Left colon (tissue), 2 donors: ENCODE measurements at regions of chr14 and their contacts with region 1.

Region 1: GRCh38 chr14:20855652-20856291 is 35.4 kb upstream of the RNASE3 start:
- DNase-seq: peak; percentile 44 to 47
- ATAC-seq: peak; percentile 94

Region 2: DNA sequence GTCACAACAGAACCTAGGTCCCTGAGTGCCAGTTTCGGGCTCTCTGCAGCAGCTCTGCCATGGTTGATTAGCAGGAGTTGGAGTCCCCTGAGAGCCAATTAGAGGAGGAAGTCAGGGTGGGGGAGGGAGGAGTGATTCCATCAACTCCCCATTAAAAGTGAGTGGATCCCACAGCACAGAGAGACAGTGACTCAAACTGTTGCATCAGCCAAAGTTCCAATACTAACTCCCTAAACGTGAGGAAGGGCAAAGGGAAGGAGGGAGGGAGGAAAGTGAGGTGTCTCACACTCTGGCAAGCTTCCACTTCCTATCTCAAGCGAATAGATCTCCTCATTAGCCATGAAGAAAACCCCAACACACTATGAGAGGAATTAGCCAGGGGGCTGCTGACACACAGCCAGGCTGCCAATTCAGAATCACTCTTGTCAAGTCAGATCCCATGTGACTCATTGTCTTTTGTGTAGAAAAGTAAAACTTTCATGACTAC is 593.1 kb before region 1 on chr14:
- intact Hi-C with region 1: no loop called
- DNase-seq: no peak
- ATAC-seq: no peak

Region 3: DNA sequence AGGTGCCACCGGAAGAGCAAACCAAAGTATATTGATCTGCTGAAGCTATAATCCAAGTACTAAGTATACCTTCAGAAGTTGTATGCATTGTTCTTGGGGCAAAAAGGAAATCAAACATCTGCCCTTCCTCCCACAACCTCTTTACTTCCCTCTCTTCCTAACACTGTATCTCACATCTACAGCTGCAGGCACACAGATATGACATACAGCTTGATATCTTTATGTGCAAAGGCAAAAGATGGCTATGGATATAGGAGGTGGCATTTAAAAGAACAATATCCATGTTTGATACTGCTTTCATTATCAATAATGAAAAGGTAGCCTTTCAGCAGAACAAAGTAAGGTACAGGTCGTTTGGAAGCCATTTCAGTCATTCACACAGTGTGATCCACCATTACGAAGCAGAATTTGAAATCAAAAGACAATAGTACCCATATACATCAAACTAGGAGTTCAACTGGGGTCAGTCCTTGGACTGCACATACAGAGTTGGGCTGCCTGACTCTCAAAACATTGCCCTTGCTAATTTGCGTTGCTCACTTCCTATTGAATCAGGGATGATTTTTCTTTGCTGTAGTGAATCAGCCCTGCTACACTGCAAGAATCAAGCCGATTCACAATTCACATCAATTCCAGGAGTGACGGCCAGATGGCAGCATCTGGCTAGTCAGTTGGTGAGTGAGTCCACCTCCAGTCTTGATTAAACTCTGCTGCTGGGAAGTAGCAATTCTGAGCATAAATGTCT is 158.3 kb before region 1 on chr14:
- intact Hi-C with region 1: loop called in 1 of 2 experiments (anchors 2 kb)
- DNase-seq: peak in 1 of 2 donors; percentile 69
- ATAC-seq: peak; percentile 90

Region 4: GRCh38 chr14:20970983-20971704 is 115.4 kb after region 1 on chr14:
- intact Hi-C with region 1: loop called in 1 of 2 experiments (anchors 10 kb)
- DNase-seq: peak; percentile 75 to 81
- ATAC-seq: peak; percentile 97

Region 5: DNA sequence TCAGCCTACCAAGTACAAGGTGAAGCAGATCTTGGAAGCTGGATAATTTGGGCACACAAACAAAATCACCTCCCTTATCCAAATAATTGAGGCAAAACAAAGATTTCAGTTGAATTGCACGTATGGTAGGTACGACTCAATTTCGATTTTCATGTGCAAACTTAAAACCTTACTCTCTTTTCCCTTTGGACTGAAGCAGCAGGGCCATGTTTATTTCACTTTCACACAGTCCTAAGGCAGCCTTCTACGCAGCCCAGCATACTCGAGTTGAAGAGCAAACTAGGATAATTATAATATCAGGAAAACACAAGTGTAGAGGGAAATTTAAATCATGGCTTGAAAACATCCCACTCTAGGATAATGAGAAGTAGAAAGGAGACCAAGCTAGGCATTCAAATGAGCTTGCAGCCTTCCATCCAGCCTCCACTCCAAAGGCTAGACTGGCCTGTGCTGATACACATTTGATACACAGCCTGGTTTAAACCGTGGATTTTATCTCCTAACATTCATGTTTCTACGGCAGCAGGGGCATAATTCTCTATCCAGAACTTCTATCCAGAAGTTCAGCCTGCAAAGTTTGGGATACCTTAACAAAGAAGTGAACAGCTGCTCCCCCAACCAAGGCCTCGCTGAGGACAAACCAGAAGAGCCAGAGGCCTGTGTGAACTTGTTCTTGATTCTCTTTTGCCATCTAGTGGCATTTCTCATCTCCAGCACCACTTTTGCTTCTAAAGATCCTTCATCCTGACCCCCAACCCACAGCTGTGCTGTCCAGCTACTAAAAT is 184.0 kb after region 1 on chr14:
- intact Hi-C with region 1: loop called in 1 of 2 experiments (anchors 5 kb)
- DNase-seq: peak; percentile 44 to 55
- ATAC-seq: peak; percentile 52